Activated CD4-positive, alpha-beta T cell treated with anti-CD3 and anti-CD28 coated beads for 36 hours (primary cell): ENCODE measurements at regions of chr6 and their contacts with region 1.

Region 1: GRCh38 chr6:65013700-65014405 is 693.2 kb downstream of the EYS start:
- DNase-seq: no peak
- ATAC-seq: no peak
- H3K4me3 Mint-ChIP-seq: no peak overlapping the region
- H3K27ac Mint-ChIP-seq: no peak overlapping the region
- H3K4me1 Mint-ChIP-seq: no peaks in the 10 kb centered on the region
- H3K27me3 Mint-ChIP-seq: no peaks in the 10 kb centered on the region

Region 2: DNA sequence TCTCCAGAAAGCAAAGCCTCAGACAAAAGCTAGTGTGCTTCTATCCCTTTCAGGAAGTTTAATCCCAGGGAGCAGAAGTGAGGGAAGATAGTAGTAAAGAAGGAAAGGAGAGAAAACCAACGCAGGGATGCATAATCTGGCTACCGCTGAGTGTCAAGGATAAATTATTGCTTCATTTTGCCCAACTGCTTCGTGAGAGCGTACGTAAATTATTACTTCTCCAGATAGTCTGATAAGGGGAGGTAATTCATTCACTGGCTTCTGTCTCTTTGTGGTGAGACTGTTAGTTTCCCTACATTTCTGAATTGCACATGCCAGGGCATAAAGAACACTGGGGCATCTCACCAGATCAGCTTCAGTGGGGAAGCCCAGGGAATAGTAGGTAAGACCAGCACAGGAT is 838.6 kb before region 1 on chr6:
- CTCF ChIA-PET with region 1: no interaction called
- POLR2A ChIA-PET with region 1: no interaction called
- intact Hi-C with region 1: loop called in 1 of 2 experiments (anchors 5 kb)
- DNase-seq: no peak
- ATAC-seq: no peak
- H3K4me3 Mint-ChIP-seq: no peak overlapping the region
- H3K27ac Mint-ChIP-seq: no peak overlapping the region
- H3K4me1 Mint-ChIP-seq: no peaks in the 10 kb centered on the region
- H3K27me3 Mint-ChIP-seq: no peaks in the 10 kb centered on the region

Region 3: GRCh38 chr6:64949257-64949656 is 64.6 kb before region 1 on chr6:
- CTCF ChIA-PET with region 1: no interaction called
- POLR2A ChIA-PET with region 1: no interaction called
- intact Hi-C with region 1: no loop called
- DNase-seq: no peak
- ATAC-seq: no peak
- H3K4me3 Mint-ChIP-seq: no peak overlapping the region
- H3K27ac Mint-ChIP-seq: no peak overlapping the region
- H3K4me1 Mint-ChIP-seq: no peaks in the 10 kb centered on the region
- H3K27me3 Mint-ChIP-seq: no peaks in the 10 kb centered on the region